ENCODE measurements at regions of chr17 and their contacts with region 1.

Region 1: DNA sequence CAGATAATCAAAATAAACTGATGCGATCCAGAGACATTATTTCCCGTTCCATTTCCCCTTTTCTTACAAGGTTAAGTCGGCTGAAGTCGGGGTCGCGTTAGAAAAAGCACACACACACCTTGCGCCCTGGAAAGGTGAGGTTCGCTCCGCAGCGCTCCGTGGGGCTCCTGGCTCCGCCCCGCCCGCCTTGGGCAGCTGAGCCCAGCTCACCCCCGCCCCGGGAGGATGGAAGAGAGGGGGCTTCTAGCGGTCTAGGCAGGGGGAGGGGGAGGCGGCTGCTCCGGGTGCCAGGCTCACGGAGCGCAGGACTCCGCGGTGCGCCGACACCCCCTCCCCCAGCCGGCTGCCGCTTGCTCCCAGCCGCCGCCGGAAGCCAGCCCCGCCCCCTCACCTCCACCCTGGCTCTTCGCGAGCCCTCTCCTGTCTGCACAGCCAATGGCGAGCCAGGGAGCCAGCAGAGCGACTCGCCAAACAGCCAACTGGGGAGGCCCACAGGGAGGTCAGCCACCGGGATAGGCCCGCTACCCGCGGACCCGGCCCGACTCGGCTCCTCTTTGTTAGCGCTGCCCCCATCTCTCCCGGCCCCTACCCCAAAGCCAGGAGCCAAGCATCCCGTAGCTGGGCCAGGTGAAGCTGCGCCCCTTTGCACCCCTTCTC is 30.4 kb downstream of the FAM222B start:
- DNase-seq: peak; percentile 93 to 98
- H3K4me3 ChIP-seq: peak overlapping the region; percentile 74 to 90
- H3K27ac ChIP-seq: peak overlapping the region; percentile 90
- H3K4me1 ChIP-seq: peaks cover 0 to 43% of the 10 kb centered on the region in 2 donors
- H3K27me3 ChIP-seq: no peaks in the 10 kb centered on the region
- CTCF ChIP-seq: no peak

Region 2: GRCh38 chr17:28828294-28829040 is 16.2 kb after region 1 on chr17:
- intact Hi-C with region 1: no loop called
- DNase-seq: no peak
- H3K4me3 ChIP-seq: no peak overlapping the region
- H3K27ac ChIP-seq: no peak overlapping the region
- H3K4me1 ChIP-seq: no peaks in the 10 kb centered on the region
- H3K27me3 ChIP-seq: no peaks in the 10 kb centered on the region
- CTCF ChIP-seq: no peak

Region 3: GRCh38 chr17:28842282-28843012 is 30.2 kb after region 1 on chr17 and contains the start of gene FAM222B:
- intact Hi-C with region 1: loop called (anchors 1 kb)
- DNase-seq: peak; percentile 39 to 89
- H3K4me3 ChIP-seq: peak within 1 kb of the TSS; percentile 69 to 70
- H3K27ac ChIP-seq: peak within 1 kb of the TSS; percentile 71 to 76
- H3K4me1 ChIP-seq: peaks cover 0 to 9% of the 10 kb centered on the region in 2 donors
- H3K27me3 ChIP-seq: no peaks in the 10 kb centered on the region
- CTCF ChIP-seq: peak in 1 of 3 experiments; percentile 7
- total RNA-seq, gene FAM222B: 30.7 TPM

Region 4: DNA sequence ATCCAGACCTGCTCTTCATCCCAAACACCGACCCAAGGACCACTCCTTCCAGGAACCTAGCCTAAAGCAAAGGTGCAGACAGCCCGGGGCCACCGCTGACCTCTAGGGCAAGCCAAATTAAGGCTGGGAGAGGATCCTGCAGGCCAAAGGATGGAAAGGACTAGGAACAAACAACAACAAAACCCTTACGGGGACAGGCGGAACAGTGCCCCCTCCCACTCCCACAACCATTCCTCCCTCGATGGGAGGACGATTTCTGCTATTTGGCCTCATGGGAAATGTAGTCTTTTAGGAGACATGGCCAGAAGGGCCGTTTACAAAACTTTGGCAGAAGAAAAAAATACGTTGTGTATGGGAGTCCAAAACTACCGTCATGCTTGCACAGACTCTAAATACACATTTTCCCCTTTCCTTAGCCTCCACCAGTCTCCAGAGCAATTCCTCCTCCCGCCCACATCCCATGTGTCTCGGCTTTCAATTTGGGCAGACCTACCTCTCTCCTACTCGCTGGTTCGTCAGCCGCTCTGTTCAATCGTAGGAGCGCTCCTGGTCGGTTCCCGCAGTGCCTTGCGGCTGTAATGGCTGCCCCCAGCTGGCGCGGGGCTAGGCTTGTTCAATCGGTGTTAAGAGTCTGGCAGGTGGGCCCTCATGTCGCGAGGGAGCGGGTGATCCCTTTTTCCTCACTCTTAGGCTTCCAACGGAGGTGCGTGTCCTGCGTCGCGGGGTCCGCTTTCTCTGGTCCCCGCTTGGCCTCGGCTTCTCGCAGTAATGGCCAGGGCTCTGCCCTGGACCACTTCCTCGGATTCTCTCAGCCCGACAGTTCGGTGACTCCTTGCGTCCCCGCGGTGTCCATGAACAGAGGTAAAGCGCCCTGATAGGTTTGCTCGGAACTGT is 42.5 kb after region 1 on chr17 and contains the start of gene ERAL1:
- intact Hi-C with region 1: loop called (anchors 2 kb)
- DNase-seq: peak; percentile 41 to 89
- H3K4me3 ChIP-seq: peak within 1 kb of the TSS; percentile 77 to 85
- H3K27ac ChIP-seq: peak within 1 kb of the TSS; percentile 78 to 79
- H3K4me1 ChIP-seq: peaks cover 6% of the 10 kb centered on the region in 2 donors
- H3K27me3 ChIP-seq: no peaks in the 10 kb centered on the region
- CTCF ChIP-seq: peak in 1 of 3 experiments; percentile 8
- total RNA-seq, gene ERAL1: 5.7 TPM

Region 5: DNA sequence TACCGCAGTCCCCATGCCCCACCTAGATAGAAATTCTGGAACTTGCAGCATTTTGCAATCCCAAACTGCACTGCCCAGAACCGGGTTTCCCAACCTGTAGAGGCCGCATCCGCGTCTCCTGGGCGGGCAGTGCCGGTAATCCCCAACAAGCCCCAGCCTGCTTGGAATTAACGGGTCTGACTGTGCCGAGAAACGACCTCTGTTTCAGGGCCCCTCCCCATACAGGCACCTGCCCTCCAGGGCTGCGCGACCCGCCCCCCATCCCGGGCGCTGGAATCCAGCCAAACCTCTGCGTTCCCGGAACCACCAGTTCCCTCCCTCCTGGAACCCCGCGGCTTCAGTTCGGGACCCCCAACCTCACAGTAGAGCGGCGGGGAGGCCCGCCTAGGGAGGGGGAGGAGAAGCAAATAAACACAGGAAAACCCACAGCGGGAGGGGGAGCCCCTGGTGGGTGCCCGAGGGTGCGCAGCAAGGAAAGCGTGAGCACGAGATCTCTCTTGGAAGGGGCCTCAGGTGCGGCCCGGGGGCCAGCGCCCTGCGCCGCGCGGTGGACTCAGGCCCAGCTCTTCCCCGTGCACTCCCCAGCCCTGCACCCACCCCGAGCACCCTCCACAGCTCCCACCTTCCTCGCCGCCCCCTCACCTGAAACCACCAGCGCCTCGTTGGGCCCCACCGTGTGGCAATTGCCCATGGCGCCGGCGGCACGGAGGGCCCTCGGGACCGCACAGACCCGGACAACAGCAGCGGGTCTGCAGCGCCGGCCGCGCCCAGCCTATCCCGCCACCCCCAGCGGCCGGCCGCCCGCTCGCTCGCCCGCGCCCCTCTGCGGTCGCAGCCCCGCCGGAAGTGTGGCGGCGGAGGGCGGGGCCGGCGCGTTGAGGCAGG is 84.9 kb after region 1 on chr17 and contains the start of gene FLOT2:
- intact Hi-C with region 1: loop called (anchors 2 kb)
- DNase-seq: peak in 1 of 2 donors; percentile 87
- H3K4me3 ChIP-seq: peak within 1 kb of the TSS; percentile 63 to 87
- H3K27ac ChIP-seq: peak within 1 kb of the TSS; percentile 93 to 95
- H3K4me1 ChIP-seq: peaks cover 3 to 42% of the 10 kb centered on the region in 2 donors
- H3K27me3 ChIP-seq: no peaks in the 10 kb centered on the region
- CTCF ChIP-seq: peak; percentile 5 to 20 (median 16)
- total RNA-seq, gene FLOT2: 72.4 TPM